HEK293T (cell line): ENCODE measurements at regions of chr12 and their contacts with region 1.

Region 1: DNA sequence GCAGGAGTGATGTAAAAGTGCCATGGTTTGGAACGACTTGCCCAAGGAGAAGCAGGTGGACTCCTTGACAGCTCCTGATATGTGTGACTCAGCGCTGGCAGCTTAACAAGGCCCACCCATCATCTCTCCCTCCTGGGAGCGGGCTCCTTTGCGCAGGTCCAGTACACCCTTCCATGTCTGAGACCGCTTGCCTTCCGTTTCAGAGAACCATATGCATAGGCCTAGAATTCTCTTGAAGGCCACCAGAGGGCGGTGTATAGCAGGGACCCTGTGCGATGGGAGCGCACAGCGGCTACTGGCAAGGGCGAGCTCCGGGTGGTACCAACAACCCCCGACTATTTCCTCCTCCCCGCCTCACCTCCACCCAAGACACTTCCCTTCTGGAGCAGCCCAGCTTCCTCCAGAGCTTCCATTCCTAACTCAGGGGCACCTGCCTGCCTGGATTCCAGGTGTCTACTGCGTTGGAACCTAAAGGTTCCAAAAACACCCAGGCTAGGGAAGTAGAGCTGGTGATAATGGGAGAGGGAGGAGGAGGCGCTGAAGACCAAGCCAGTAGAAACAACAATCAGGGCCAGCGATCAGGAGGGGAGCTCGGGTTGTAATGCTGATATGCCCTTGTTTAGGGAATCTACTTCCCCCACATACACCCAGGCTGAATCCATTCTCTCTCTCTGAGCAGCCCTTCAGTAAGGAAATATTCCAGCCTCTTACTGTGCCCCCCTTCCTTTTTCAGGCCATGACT is 6.2 kb downstream of the DHH start:
- DNase-seq: peak; percentile 86

Region 2: DNA sequence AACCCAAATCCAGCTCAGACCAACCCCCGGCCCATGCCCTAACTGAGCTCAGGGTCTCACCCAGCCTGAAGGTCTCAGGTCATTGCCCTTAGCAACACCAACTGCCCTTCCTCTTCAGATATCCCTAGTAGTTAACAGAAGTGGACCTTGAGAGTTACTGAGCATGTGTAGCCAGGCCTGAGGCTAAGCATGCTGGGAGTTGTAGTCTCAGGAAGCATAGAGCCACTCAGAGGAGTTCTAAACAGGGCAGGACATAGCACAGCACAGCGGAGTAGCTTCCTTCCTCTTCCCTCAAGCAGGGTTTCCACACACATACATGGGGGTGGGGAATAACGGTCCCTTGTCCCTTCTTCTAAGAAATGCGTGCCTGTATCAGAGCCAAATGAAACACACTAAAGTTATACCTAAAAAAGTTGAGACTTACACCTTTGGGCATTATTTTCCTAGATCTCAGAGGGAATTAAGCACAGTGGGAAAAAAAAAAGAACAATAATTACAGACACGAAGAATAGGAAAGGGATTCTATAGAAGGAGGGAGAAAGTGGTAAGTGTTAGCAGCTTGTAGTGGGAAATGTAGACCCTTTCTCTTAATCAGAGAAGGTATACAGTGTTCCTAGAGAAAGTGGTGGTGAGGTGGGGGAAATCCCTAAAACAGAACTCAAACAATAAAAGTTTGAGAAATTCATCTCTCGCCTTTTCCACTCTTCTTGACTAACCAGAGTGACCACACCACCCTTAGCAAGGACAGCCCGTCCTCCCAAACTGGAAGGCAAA is 32.2 kb before region 1 on chr12:
- CTCF ChIA-PET with region 1: interaction called, 10 read pairs
- POLR2A ChIA-PET with region 1: no interaction called
- DNase-seq: peak; percentile 74

Region 3: DNA sequence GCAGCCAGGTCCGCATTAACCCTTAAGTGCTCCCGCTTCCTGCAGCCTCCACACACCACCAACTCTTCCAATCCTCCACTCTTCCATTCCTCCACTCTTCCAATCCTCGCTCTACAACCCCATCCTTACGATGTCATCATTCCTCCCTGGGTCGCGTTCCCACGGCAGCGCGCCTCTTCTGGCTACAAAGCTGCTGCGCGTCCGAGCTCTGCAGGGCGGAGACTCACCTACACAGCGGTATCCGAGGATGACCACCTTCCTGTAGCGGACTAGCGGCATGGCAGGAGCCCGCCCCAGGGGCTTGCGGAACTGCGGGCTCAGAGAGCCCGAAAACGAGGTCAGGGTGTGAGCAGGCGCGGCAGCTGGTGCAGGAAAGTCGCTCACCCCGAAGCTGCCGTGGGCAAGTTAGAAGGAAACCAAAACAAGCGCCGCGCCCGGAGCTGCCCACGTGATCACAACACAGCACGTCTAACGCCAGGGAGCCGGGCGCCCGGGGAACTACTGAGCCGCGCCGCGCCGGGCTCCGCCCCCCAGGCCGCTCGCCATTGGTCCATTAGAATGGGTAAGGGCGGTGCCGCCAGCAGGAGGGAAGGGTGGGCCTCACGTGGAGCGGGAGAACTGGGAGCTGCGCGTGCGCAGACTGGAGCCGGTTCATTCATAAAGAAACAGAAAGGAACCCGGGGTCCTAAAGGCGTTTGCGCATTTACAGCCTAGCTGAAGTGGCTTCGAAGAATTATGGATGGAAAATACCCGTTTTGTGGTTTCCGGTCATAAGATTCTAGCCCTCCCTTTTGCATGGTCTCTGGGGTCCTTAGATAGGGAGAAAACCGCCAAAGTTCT is 18.6 kb before region 1 on chr12 and contains the start of gene RHEBL1:
- CTCF ChIA-PET with region 1: interaction called, 57 read pairs
- POLR2A ChIA-PET with region 1: interaction called, 16 read pairs
- DNase-seq: peak; percentile 96

Region 4: DNA sequence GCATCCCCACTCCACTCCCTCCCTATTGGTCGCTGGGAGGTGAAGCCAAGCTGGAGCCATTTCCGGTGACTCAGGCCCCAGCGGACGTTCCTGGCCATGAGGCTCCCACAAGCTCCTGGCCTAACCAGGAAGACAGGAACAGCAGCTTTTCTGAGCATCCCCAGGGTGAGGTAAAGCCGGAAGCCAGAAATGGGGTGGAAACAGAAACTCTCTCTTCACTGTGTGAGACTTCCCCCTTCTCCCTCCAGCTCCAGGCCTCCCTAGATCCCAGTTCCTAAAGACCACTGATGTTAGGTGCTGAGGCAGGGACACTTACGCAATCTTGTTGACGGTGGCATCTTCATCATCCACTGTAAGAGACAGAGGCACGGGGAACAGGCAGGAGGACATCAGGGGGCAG is 17.2 kb after region 1 on chr12:
- CTCF ChIA-PET with region 1: interaction called, 35 read pairs
- POLR2A ChIA-PET with region 1: interaction called, 6 read pairs
- DNase-seq: no peak

Region 5: DNA sequence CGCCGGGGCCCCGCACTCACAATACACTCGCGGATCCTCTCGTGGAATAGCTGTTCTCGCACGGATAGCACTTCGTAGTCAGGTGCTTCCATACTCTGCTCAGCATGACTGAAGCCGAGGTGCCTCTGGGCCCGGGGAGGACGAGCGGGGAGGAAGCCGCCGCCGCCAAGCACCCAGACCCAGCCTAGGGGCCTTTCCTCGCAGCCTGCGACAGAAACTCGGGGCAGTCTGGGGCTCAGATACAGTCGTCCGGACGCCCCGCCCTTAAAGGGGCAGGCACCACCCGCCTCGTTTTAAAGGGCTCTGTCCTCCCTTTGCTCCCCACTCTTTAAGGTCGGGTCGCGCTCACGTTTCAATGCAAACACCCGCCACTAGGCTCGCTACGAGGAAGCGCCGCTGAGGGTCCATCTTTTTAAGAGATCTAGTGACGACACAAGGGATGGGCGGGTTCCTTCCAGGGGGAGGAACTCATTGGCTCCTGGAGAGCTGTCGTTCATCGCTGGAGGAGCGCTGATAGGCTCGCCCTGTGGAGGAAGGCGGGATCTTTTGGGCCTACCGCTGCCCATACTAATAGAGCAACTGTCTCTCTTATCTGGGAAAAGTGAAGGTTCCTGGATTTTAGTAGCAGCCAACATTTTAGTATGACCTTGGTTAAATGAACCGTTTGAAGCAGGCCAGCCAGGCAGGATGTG is 22.2 kb after region 1 on chr12 and contains the start of gene LMBR1L:
- CTCF ChIA-PET with region 1: interaction called, 21 read pairs
- POLR2A ChIA-PET with region 1: interaction called, 4 read pairs
- DNase-seq: peak; percentile 98

Region 6: DNA sequence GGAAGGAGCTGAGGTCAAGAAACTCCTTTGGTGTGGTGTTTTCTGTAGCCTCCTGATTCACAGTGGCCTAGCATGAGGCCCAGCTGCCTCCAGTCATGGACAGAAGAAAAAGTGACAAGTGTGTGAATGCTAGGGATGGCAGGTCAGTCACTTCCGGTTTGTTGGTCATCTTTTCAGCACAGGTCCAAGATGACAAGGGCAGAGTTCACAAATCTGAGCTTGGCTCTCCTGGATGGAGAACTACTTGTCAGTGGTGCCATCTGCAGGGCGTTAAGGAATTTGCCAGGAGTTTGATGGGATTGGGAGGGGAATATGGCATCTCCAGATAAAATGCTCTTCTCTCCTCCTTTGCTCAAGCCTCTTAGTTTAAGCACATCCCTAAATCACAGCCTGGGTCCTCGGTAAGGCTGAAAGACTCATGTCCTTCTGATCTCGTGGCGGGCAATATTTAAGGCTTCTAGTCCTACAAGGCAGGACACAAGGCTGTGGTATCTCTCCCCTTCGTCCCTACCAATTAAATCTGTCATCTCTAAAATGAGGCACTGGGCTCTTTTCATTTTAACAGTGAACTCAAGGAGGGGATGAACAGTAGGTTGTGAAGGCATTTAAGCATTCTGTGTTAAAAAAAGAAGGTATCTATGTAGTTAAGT is 32.8 kb after region 1 on chr12:
- CTCF ChIA-PET with region 1: interaction called, 11 read pairs
- POLR2A ChIA-PET with region 1: interaction called, 5 read pairs
- DNase-seq: peak; percentile 58